ENCODE measurements at regions of chr5 and their contacts with region 1.

Region 1: GRCh38 chr5:41903892-41904799 is at the start of gene RIMOC1:
- DNase-seq: peak; percentile 98
- ATAC-seq: peak; percentile 89
- H3K4me3 ChIP-seq: peak within 1 kb of the TSS; percentile 34 to 90 (median 80)
- H3K4me3 Mint-ChIP-seq: peak within 1 kb of the TSS; percentile 96
- H3K27ac ChIP-seq: peak within 1 kb of the TSS; percentile 89 to 98
- H3K27ac Mint-ChIP-seq: peak within 1 kb of the TSS; percentile 98
- H3K4me1 ChIP-seq: peaks cover 15 to 17% of the 10 kb centered on the region in 2 donors
- H3K4me1 Mint-ChIP-seq: peaks cover 34% of the 10 kb centered on the region
- H3K27me3 ChIP-seq: peaks cover 0 to 3% (median 1%) of the 10 kb centered on the region in 4 experiments
- H3K27me3 Mint-ChIP-seq: peaks cover 8% of the 10 kb centered on the region
- CTCF ChIP-seq: no peak
- total RNA-seq, gene RIMOC1: 32.1 and 33.1 TPM in 2 replicates

Region 2: GRCh38 chr5:40834849-40835787 is 1069.0 kb before region 1 on chr5 and contains the start of gene RPL37:
- CTCF ChIA-PET with region 1: no interaction called
- POLR2A ChIA-PET with region 1: no interaction called
- intact Hi-C with region 1: loop called (anchors 5 kb)
- DNase-seq: peak; percentile 95
- ATAC-seq: peak; percentile 98
- H3K4me3 ChIP-seq: peak within 1 kb of the TSS; percentile 74 to 99 (median 89)
- H3K4me3 Mint-ChIP-seq: peak within 1 kb of the TSS; percentile 99
- H3K27ac ChIP-seq: peak within 1 kb of the TSS; percentile 85 to 91
- H3K27ac Mint-ChIP-seq: peak within 1 kb of the TSS; percentile 98
- H3K4me1 ChIP-seq: peaks cover 21 to 23% of the 10 kb centered on the region in 2 donors
- H3K4me1 Mint-ChIP-seq: peaks cover 43% of the 10 kb centered on the region
- H3K27me3 ChIP-seq: no peaks in the 10 kb centered on the region
- H3K27me3 Mint-ChIP-seq: no peaks in the 10 kb centered on the region
- CTCF ChIP-seq: no peak
- total RNA-seq, gene RPL37: 1,932 and 2,240 TPM in 2 replicates

Region 3: GRCh38 chr5:41869739-41870626 is 34.2 kb before region 1 on chr5 and contains the start of gene OXCT1:
- CTCF ChIA-PET with region 1: interaction called, 5 read pairs
- POLR2A ChIA-PET with region 1: interaction called, 11 read pairs
- intact Hi-C with region 1: loop called (anchors 1 kb)
- DNase-seq: peak; percentile 95
- ATAC-seq: peak; percentile 95
- H3K4me3 ChIP-seq: peak within 1 kb of the TSS; percentile 74 to 97 (median 89)
- H3K4me3 Mint-ChIP-seq: peak within 1 kb of the TSS; percentile 94
- H3K27ac ChIP-seq: peak within 1 kb of the TSS; percentile 79 to 85
- H3K27ac Mint-ChIP-seq: peak within 1 kb of the TSS; percentile 95
- H3K4me1 ChIP-seq: peaks cover 16 to 20% of the 10 kb centered on the region in 2 donors
- H3K4me1 Mint-ChIP-seq: peaks cover 38% of the 10 kb centered on the region
- H3K27me3 ChIP-seq: no peaks in the 10 kb centered on the region
- H3K27me3 Mint-ChIP-seq: no peaks in the 10 kb centered on the region
- CTCF ChIP-seq: no peak
- total RNA-seq, gene OXCT1: 34.9 and 35.6 TPM in 2 replicates

Region 4: GRCh38 chr5:41893074-41893851 is 10.9 kb before region 1 on chr5:
- CTCF ChIA-PET with region 1: no interaction called
- POLR2A ChIA-PET with region 1: no interaction called
- intact Hi-C with region 1: no loop called
- DNase-seq: no peak
- ATAC-seq: no peak
- H3K4me3 ChIP-seq: no peak overlapping the region
- H3K4me3 Mint-ChIP-seq: no peak overlapping the region
- H3K27ac ChIP-seq: no peak overlapping the region
- H3K27ac Mint-ChIP-seq: no peak overlapping the region
- H3K4me1 ChIP-seq: no peaks in the 10 kb centered on the region
- H3K4me1 Mint-ChIP-seq: no peaks in the 10 kb centered on the region
- H3K27me3 ChIP-seq: peaks cover 0 to 27% (median 21%) of the 10 kb centered on the region in 4 experiments
- H3K27me3 Mint-ChIP-seq: peaks cover 60% of the 10 kb centered on the region
- CTCF ChIP-seq: no peak

Region 5: GRCh38 chr5:42074353-42074752 is 170.2 kb after region 1 on chr5:
- CTCF ChIA-PET with region 1: no interaction called
- POLR2A ChIA-PET with region 1: no interaction called
- intact Hi-C with region 1: no loop called
- DNase-seq: no peak
- ATAC-seq: no peak
- H3K4me3 ChIP-seq: no peak overlapping the region
- H3K4me3 Mint-ChIP-seq: no peak overlapping the region
- H3K27ac ChIP-seq: no peak overlapping the region
- H3K27ac Mint-ChIP-seq: no peak overlapping the region
- H3K4me1 ChIP-seq: no peaks in the 10 kb centered on the region
- H3K4me1 Mint-ChIP-seq: no peaks in the 10 kb centered on the region
- H3K27me3 ChIP-seq: peaks cover 0 to 4% (median 1%) of the 10 kb centered on the region in 4 experiments
- H3K27me3 Mint-ChIP-seq: no peaks in the 10 kb centered on the region
- CTCF ChIP-seq: no peak

Region 6: GRCh38 chr5:42274913-42275312 is 370.8 kb after region 1 on chr5:
- CTCF ChIA-PET with region 1: no interaction called
- POLR2A ChIA-PET with region 1: no interaction called
- intact Hi-C with region 1: no loop called
- DNase-seq: no peak
- ATAC-seq: no peak
- H3K4me3 ChIP-seq: no peak overlapping the region
- H3K4me3 Mint-ChIP-seq: no peak overlapping the region
- H3K27ac ChIP-seq: no peak overlapping the region
- H3K27ac Mint-ChIP-seq: no peak overlapping the region
- H3K4me1 ChIP-seq: no peaks in the 10 kb centered on the region
- H3K4me1 Mint-ChIP-seq: no peaks in the 10 kb centered on the region
- H3K27me3 ChIP-seq: no peaks in the 10 kb centered on the region
- H3K27me3 Mint-ChIP-seq: no peaks in the 10 kb centered on the region
- CTCF ChIP-seq: no peak

Measured in B cell (primary cell).